Breast epithelium (tissue), 4 donors: ENCODE measurements at regions of chr6 and their contacts with region 1.

Region 1: GRCh38 chr6:64054861-64055260 is 419.3 kb downstream of the PHF3 start:
- DNase-seq: no peak
- H3K4me3 ChIP-seq: no peak overlapping the region
- H3K27ac ChIP-seq: no peak overlapping the region
- H3K4me1 ChIP-seq: no peaks in the 10 kb centered on the region
- H3K27me3 ChIP-seq: no peaks in the 10 kb centered on the region
- CTCF ChIP-seq: no peak
- POLR2A ChIP-seq: no peak

Region 2: DNA sequence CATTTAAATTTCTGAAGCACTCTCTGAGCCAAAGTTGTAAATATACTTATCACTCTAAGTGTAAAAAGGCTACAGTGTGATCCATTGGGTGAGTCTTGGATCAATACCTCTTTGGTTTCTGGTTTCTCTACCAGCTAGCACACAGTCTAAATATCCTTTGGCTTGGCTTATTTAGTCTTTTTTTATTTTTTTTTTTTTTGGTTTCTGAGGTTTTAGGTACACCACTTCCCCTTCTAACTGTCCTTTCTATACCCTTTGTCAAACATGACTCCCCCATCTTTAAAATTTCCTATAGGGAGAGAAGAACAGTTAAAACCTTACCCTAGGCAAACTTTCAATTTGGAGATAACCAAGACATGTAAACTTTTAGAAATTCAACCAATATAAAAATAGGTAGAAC is 40.3 kb before region 1 on chr6:
- intact Hi-C with region 1: loop called (anchors 2 kb)
- DNase-seq: no peak
- H3K4me3 ChIP-seq: no peak overlapping the region
- H3K27ac ChIP-seq: no peak overlapping the region
- H3K4me1 ChIP-seq: no peaks in the 10 kb centered on the region
- H3K27me3 ChIP-seq: no peaks in the 10 kb centered on the region
- CTCF ChIP-seq: no peak
- POLR2A ChIP-seq: no peak